Breast epithelium (tissue), 4 donors: ENCODE measurements at regions of chr3 and their contacts with region 1.

Region 1: GRCh38 chr3:168427835-168428475 is 332.2 kb upstream of the GOLIM4 start:
- DNase-seq: no peak
- H3K4me3 ChIP-seq: no peak overlapping the region
- H3K27ac ChIP-seq: no peak overlapping the region
- H3K4me1 ChIP-seq: no peaks in the 10 kb centered on the region
- H3K27me3 ChIP-seq: no peaks in the 10 kb centered on the region
- CTCF ChIP-seq: no peak
- POLR2A ChIP-seq: no peak

Region 2: DNA sequence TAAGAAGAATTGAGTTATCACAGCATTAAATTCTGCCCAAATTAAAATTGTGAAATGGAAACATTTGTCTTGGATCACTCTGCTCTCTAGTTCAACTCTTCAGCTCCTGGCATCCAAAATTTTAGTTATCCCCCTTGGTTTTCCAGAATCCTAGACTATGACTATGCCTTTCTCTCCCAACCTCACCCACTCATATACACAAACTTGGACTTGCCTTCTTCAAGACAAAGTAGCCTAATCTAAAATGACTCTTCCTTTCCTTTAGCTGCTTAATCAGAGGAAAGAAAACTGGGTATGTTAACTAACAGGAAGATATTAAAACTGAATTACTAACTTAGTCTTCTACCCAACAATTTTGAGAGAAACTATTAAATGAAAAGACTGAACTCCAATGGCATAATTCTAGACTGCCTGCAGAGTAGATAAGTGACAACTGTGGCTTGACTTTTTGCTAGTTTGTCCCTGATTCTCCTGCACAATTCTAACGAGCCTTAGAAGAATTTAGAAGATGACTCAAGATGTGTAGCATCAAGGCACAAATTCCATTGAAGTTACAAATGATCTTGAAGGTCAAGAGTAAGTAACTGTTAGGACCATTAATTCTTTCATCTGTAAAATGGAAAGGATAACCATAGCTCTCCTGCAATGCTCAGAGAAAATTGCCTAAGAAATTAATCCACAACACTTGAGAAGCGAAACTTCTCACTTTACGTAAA is 327.0 kb before region 1 on chr3:
- intact Hi-C with region 1: no loop called
- DNase-seq: no peak
- H3K4me3 ChIP-seq: no peak overlapping the region
- H3K27ac ChIP-seq: no peak overlapping the region
- H3K4me1 ChIP-seq: no peaks in the 10 kb centered on the region
- H3K27me3 ChIP-seq: no peaks in the 10 kb centered on the region
- CTCF ChIP-seq: no peak
- POLR2A ChIP-seq: no peak

Region 3: DNA sequence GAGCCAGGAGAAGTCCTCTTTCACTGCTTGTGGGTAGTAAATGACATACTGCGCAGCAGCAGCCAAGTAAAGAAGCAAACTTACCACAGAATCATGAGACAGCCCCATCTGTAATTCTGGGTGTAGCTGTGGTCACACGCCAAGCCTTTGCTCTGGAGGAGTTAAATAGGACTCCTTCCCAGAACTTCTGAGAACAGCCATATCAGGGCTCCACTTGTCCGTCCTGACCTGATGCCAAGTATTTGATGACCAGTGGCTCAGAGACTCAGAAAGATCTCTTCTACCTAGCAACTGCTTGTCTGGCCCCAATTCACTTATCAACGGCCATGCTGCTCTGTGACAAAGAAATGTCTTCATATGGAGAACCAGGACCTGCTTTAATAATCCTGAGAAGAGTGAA is 311.7 kb before region 1 on chr3:
- intact Hi-C with region 1: no loop called
- DNase-seq: no peak
- H3K4me3 ChIP-seq: no peak overlapping the region
- H3K27ac ChIP-seq: peak overlapping the region; percentile 35 to 43
- H3K4me1 ChIP-seq: no peaks in the 10 kb centered on the region
- H3K27me3 ChIP-seq: no peaks in the 10 kb centered on the region
- CTCF ChIP-seq: no peak
- POLR2A ChIP-seq: no peak

Region 4: GRCh38 chr3:168384990-168385389 is 43.0 kb before region 1 on chr3:
- intact Hi-C with region 1: loop called (anchors 2 kb)
- DNase-seq: no peak
- H3K4me3 ChIP-seq: no peak overlapping the region
- H3K27ac ChIP-seq: no peak overlapping the region
- H3K4me1 ChIP-seq: no peaks in the 10 kb centered on the region
- H3K27me3 ChIP-seq: no peaks in the 10 kb centered on the region
- CTCF ChIP-seq: no peak
- POLR2A ChIP-seq: no peak

Region 5: DNA sequence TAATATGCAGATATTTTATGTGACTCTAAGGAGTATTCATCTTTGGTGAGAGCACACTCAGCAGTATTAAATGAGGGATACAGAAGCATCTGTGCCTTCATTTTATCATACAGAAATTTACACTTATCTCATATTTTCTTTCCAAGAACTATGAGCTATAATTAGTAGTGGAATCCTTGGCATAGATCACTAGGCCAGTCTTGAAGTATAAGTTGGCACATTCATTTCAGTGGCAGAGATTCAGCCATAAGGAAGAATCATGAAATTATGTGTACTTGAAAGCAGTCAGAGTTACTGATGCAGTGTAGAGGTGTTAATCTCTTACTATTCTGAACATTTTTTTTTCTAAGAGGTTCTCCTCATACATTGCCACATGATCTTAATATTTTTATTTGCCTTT is 61.3 kb after region 1 on chr3:
- intact Hi-C with region 1: no loop called
- DNase-seq: no peak
- H3K4me3 ChIP-seq: no peak overlapping the region
- H3K27ac ChIP-seq: no peak overlapping the region
- H3K4me1 ChIP-seq: no peaks in the 10 kb centered on the region
- H3K27me3 ChIP-seq: no peaks in the 10 kb centered on the region
- CTCF ChIP-seq: no peak
- POLR2A ChIP-seq: no peak